ENCODE measurements at regions of chr3 and their contacts with region 1.

Region 1: GRCh38 chr3:22565393-22565792 is 637.7 kb upstream of the UBE2E2 start:
- DNase-seq: no peak
- H3K4me3 Mint-ChIP-seq: no peak overlapping the region
- H3K27ac Mint-ChIP-seq: no peak overlapping the region
- H3K4me1 Mint-ChIP-seq: no peaks in the 10 kb centered on the region
- H3K27me3 Mint-ChIP-seq: no peaks in the 10 kb centered on the region

Region 2: DNA sequence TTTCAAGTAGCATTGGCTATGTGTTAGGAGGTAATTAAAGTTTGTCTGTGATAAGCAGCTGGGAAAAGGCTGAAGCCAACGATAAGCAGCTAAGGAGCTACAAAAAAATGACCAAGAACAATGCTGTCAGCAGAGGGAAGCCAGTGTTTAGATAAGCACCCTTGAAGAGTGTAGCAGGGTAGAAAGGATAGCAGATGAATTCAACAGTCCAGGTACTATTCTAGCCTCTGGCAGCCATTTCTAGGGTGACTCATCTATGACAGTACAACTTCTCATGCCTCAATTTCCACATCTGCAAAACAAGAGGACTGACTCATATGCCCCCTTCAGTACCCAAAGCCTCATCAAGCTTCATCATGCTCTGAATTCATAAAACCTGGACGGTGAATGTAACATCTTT is 20.1 kb after region 1 on chr3:
- intact Hi-C with region 1: no loop called
- DNase-seq: no peak
- H3K4me3 Mint-ChIP-seq: no peak overlapping the region
- H3K27ac Mint-ChIP-seq: no peak overlapping the region
- H3K4me1 Mint-ChIP-seq: no peaks in the 10 kb centered on the region
- H3K27me3 Mint-ChIP-seq: no peaks in the 10 kb centered on the region

Region 3: GRCh38 chr3:22960105-22960984 is 395.0 kb after region 1 on chr3:
- intact Hi-C with region 1: loop called (anchors 2 kb)
- DNase-seq: no peak
- H3K4me3 Mint-ChIP-seq: no peak overlapping the region
- H3K27ac Mint-ChIP-seq: no peak overlapping the region
- H3K4me1 Mint-ChIP-seq: peaks cover 2% of the 10 kb centered on the region
- H3K27me3 Mint-ChIP-seq: no peaks in the 10 kb centered on the region

Measured in activated T-helper 2 cell treated with anti-CD3 and anti-CD28 coated beads, Interferon-gamma antibody, Interleukin-2, Interleukin-4, amounts not matched to agents 10 μg/mL and 5 μg/mL and 100 μg/mL, durations not matched to agents 14 hours and 24 hours and 36 hours (primary cell).